ENCODE measurements at regions of chr6 and their contacts with region 1.

Region 1: GRCh38 chr6:145423922-145424321 is 311.4 kb downstream of the EPM2A start:
- DNase-seq: no peak
- H3K4me3 ChIP-seq: no peak overlapping the region
- H3K27ac ChIP-seq: no peak overlapping the region
- H3K4me1 ChIP-seq: no peaks in the 10 kb centered on the region
- H3K27me3 ChIP-seq: no peaks in the 10 kb centered on the region
- CTCF ChIP-seq: no peak
- POLR2A ChIP-seq: no peak

Region 2: DNA sequence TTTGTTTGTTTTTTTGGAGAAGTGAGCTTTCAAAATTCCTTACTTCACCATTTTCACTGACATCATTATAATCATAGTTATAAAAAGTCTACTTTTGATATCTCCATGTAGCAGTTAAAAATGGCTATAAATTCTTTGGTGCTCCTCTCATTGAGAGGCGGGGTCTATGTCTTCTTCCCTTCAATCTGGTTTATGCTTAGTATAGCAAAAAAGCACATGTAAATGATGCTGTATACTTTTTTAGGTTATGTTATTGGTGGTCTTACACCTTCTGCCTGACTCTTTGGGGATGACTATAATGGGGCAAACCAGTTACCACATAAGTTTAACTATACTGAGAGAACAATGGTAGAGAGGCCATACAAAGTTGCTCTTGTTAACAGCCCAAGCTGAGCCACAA is 21.8 kb after region 1 on chr6:
- intact Hi-C with region 1: loop called (anchors 1 kb)
- DNase-seq: no peak
- H3K4me3 ChIP-seq: no peak overlapping the region
- H3K27ac ChIP-seq: no peak overlapping the region
- H3K4me1 ChIP-seq: no peaks in the 10 kb centered on the region
- H3K27me3 ChIP-seq: no peaks in the 10 kb centered on the region
- CTCF ChIP-seq: no peak
- POLR2A ChIP-seq: no peak

Measured in breast epithelium (tissue), 4 donors.